PC-3 (cell line): ENCODE measurements at regions of chr13 and their contacts with region 1.

Region 1: GRCh38 chr13:46861959-46862358 is 34.9 kb downstream of the HTR2A start:
- DNase-seq: no peak
- ATAC-seq: no peak
- H3K4me3 ChIP-seq: no peak overlapping the region
- H3K27ac ChIP-seq: no peak overlapping the region
- H3K4me1 ChIP-seq: 0 out of 2 replicates have a peak, but pooled peaks cover 12% of the 10 kb centered on the region
- H3K27me3 ChIP-seq: no peaks in the 10 kb centered on the region
- CTCF ChIP-seq: no peak

Region 2: GRCh38 chr13:46925486-46925885 is 63.5 kb after region 1 on chr13:
- CTCF ChIA-PET with region 1: no interaction called
- POLR2A ChIA-PET with region 1: no interaction called
- intact Hi-C with region 1: loop called (anchors 2 kb)
- DNase-seq: no peak
- ATAC-seq: no peak
- H3K4me3 ChIP-seq: no peak overlapping the region
- H3K27ac ChIP-seq: no peak overlapping the region
- H3K4me1 ChIP-seq: no peaks in the 10 kb centered on the region
- H3K27me3 ChIP-seq: no peaks in the 10 kb centered on the region
- CTCF ChIP-seq: no peak